ENCODE measurements at regions of chr11 and their contacts with region 1.

Region 1: DNA sequence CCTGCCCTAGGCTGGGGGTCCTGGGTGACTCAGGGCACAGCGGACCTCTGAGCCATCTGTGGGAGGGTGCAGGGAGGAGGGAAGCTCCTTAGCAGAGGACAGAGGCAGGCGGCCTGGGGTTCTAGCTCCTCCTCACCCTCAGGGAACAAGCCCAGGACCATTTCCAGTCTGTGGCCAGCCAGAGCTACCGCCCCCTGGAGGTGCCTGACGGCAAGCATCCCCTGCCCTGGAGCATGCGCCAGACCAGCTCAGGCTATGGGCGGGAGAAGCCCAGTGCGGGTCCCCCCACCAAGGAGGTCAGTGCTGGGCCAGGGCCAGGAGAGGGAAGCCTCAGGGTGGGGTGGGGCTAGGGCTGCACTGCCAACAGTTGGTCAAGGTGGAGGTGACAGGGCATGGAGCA is 26.0 kb upstream of the LRRC10B start:
- DNase-seq: no peak
- H3K4me3 ChIP-seq: no peak overlapping the region
- H3K27ac ChIP-seq: no peak overlapping the region
- H3K4me1 ChIP-seq: peaks cover 9% of the 10 kb centered on the region
- H3K27me3 ChIP-seq: no peaks in the 10 kb centered on the region
- CTCF ChIP-seq: no peak
- POLR2A ChIP-seq: no peak

Region 2: GRCh38 chr11:61516675-61517572 is 34.4 kb after region 1 on chr11:
- intact Hi-C with region 1: loop called (anchors 5 kb)
- DNase-seq: no peak
- H3K4me3 ChIP-seq: peak overlapping the region; percentile 7 to 24
- H3K27ac ChIP-seq: no peak overlapping the region
- H3K4me1 ChIP-seq: peaks cover 7% of the 10 kb centered on the region
- H3K27me3 ChIP-seq: no peaks in the 10 kb centered on the region
- CTCF ChIP-seq: peak; percentile 82 to 98 (median 97)
- POLR2A ChIP-seq: no peak

Region 3: DNA sequence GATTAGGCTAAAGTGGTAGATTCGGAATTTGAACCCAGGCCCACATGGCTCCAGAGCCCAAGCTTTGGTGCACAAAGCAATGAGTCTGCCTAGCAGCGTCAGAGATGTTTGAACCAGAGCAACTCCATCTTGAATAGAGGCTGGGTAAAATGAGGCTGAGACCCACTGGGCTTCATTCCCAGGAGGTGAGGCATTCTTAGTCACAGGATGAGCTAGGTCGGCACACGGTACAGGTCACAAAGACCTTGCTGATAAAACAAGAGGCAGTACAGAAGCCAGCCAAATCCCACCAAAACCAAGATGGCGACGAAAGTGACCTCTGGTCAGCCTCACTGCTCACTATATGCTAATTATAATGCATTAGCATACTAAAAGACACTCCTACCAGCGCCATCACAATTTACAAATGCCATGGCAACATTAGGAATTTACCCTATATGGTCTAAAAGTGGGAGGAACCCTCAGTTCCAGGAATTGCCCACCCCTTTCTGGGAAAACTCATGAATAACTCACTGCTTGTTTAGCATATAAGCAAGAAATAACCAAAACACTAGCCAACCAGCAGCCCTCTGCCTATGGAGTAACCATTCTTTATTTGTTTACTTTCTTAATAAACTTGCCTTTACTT is 157.4 kb after region 1 on chr11:
- intact Hi-C with region 1: loop called (anchors 10 kb)
- DNase-seq: no peak
- H3K4me3 ChIP-seq: no peak overlapping the region
- H3K27ac ChIP-seq: no peak overlapping the region
- H3K4me1 ChIP-seq: no peaks in the 10 kb centered on the region
- H3K27me3 ChIP-seq: no peaks in the 10 kb centered on the region
- CTCF ChIP-seq: no peak
- POLR2A ChIP-seq: no peak

Measured in vagina (tissue), 2 donors.